ENCODE measurements at regions of chr14 and their contacts with region 1.

Region 1: GRCh38 chr14:81464247-81465002 is 64.3 kb upstream of the STON2 start:
- DNase-seq: peak in 1 of 3 donors; percentile 9
- ATAC-seq: peak; percentile 33 to 42
- H3K4me3 ChIP-seq: peak overlapping the region; percentile 49
- H3K27ac ChIP-seq: no peak overlapping the region
- H3K4me1 ChIP-seq: no peaks in the 10 kb centered on the region
- H3K27me3 ChIP-seq: no peaks in the 10 kb centered on the region

Region 2: GRCh38 chr14:81122326-81122725 is 342.1 kb before region 1 on chr14:
- intact Hi-C with region 1: no loop called
- DNase-seq: no peak
- ATAC-seq: no peak
- H3K4me3 ChIP-seq: no peak overlapping the region
- H3K27ac ChIP-seq: no peak overlapping the region
- H3K4me1 ChIP-seq: no peaks in the 10 kb centered on the region
- H3K27me3 ChIP-seq: no peaks in the 10 kb centered on the region

Region 3: GRCh38 chr14:81269100-81269978 is 195.1 kb before region 1 on chr14:
- intact Hi-C with region 1: loop called in 2 of 4 experiments (anchors 5 kb)
- DNase-seq: no peak
- ATAC-seq: peak; percentile 68 to 70
- H3K4me3 ChIP-seq: no peak overlapping the region
- H3K27ac ChIP-seq: no peak overlapping the region
- H3K4me1 ChIP-seq: no peaks in the 10 kb centered on the region
- H3K27me3 ChIP-seq: no peaks in the 10 kb centered on the region

Region 4: GRCh38 chr14:81276073-81277069 is 188.1 kb before region 1 on chr14:
- intact Hi-C with region 1: loop called in 1 of 4 experiments (anchors 5 kb)
- DNase-seq: no peak
- ATAC-seq: peak in 1 of 2 donors; percentile 37
- H3K4me3 ChIP-seq: no peak overlapping the region
- H3K27ac ChIP-seq: peak overlapping the region; percentile 42
- H3K4me1 ChIP-seq: no peaks in the 10 kb centered on the region
- H3K27me3 ChIP-seq: no peaks in the 10 kb centered on the region

Region 5: GRCh38 chr14:81519200-81520011 is 55.0 kb after region 1 on chr14:
- intact Hi-C with region 1: no loop called
- DNase-seq: no peak
- ATAC-seq: peak; percentile 69 to 86
- H3K4me3 ChIP-seq: no peak overlapping the region
- H3K27ac ChIP-seq: peak overlapping the region; percentile 91
- H3K4me1 ChIP-seq: peaks cover 9% of the 10 kb centered on the region
- H3K27me3 ChIP-seq: no peaks in the 10 kb centered on the region